Activated B cell treated with CpG ODN at 0.5 μM for 24 hours (primary cell): ENCODE measurements at regions of chr18 and their contacts with region 1.

Region 1: DNA sequence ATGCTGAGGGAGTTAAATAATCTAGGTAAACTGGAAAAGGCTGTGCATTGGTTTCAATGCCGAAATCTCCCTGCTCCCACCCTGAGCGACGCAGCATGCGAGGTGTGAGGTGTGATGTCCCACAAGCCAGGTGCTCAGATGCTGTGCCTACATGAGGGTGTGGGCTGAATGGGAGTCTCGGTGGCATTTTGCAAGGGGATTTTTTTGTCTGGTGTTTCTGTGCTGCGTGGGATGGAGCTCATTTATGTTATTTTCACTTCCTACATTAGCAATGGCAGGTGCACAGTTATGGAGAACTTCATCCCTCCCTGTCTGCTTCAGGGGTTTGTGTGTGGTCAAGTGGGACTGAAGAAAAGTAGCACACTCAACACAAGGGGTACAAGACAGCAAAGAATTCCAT is 110.2 kb upstream of the CCDC68 start:
- DNase-seq: peak; percentile 24
- ATAC-seq: peak; percentile 69
- H3K4me3 Mint-ChIP-seq: peak overlapping the region; percentile 59
- H3K27ac Mint-ChIP-seq: peak overlapping the region; percentile 94
- H3K4me1 Mint-ChIP-seq: peaks cover 77% of the 10 kb centered on the region
- H3K27me3 Mint-ChIP-seq: no peaks in the 10 kb centered on the region
- CTCF ChIP-seq: no peak

Region 2: GRCh38 chr18:55018602-55019001 is 50.9 kb before region 1 on chr18:
- CTCF ChIA-PET with region 1: no interaction called
- POLR2A ChIA-PET with region 1: no interaction called
- intact Hi-C with region 1: no loop called
- DNase-seq: no peak
- ATAC-seq: no peak
- H3K4me3 Mint-ChIP-seq: no peak overlapping the region
- H3K27ac Mint-ChIP-seq: no peak overlapping the region
- H3K4me1 Mint-ChIP-seq: no peaks in the 10 kb centered on the region
- H3K27me3 Mint-ChIP-seq: no peaks in the 10 kb centered on the region
- CTCF ChIP-seq: no peak

Region 3: DNA sequence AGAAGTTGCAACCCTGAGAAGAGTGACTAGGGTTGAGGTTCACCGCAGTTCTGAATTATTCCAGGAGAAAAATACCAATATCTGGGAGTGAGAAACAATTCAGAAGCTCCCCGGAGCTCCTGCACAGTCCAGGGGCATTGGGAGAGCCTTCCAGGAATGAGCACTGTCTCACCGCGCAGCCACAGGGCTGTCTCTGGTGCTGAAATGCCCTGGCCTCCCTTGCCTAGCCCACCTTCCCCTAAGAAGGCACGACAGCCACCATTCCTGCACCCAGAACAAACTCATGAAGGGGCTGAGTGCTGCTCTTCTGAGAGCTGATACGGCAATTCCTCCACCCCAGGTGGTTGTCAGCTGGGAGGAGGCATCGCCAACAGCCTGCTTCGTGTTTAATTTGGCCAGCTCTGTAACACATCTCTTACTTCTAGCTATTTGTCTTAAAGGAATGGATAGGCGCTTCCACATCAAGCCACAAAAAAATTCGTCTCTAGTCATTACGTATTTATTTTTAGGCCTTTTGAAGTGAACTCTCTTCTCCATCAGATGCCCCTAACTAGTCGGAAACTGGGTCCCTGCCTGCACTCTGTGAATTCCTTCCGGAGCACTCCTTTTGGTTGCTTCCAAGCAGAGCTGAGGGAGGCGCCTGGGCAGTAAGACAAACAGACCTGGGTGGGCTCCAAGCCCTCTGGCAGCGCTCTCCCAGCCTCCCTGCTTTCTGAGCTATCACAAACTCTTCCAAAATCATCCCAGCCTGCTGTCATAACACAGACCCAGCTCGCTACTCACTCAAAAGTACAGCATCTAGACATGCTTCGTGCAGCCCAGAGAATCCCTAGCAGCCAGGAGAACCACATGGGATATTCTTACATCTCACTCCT is 10.2 kb after region 1 on chr18:
- CTCF ChIA-PET with region 1: no interaction called
- POLR2A ChIA-PET with region 1: interaction called, 26 read pairs
- intact Hi-C with region 1: loop called (anchors 2 kb)
- DNase-seq: no peak
- ATAC-seq: no peak
- H3K4me3 Mint-ChIP-seq: no peak overlapping the region
- H3K27ac Mint-ChIP-seq: peak overlapping the region; percentile 20
- H3K4me1 Mint-ChIP-seq: peaks cover 4% of the 10 kb centered on the region
- H3K27me3 Mint-ChIP-seq: no peaks in the 10 kb centered on the region
- CTCF ChIP-seq: no peak

Region 4: GRCh38 chr18:55085557-55086285 is 16.2 kb after region 1 on chr18:
- CTCF ChIA-PET with region 1: no interaction called
- POLR2A ChIA-PET with region 1: interaction called, 26 read pairs
- intact Hi-C with region 1: loop called (anchors 2 kb)
- DNase-seq: no peak
- ATAC-seq: peak; percentile 54
- H3K4me3 Mint-ChIP-seq: peak overlapping the region; percentile 2
- H3K27ac Mint-ChIP-seq: peak overlapping the region; percentile 30
- H3K4me1 Mint-ChIP-seq: peaks cover 42% of the 10 kb centered on the region
- H3K27me3 Mint-ChIP-seq: no peaks in the 10 kb centered on the region
- CTCF ChIP-seq: no peak

Region 5: DNA sequence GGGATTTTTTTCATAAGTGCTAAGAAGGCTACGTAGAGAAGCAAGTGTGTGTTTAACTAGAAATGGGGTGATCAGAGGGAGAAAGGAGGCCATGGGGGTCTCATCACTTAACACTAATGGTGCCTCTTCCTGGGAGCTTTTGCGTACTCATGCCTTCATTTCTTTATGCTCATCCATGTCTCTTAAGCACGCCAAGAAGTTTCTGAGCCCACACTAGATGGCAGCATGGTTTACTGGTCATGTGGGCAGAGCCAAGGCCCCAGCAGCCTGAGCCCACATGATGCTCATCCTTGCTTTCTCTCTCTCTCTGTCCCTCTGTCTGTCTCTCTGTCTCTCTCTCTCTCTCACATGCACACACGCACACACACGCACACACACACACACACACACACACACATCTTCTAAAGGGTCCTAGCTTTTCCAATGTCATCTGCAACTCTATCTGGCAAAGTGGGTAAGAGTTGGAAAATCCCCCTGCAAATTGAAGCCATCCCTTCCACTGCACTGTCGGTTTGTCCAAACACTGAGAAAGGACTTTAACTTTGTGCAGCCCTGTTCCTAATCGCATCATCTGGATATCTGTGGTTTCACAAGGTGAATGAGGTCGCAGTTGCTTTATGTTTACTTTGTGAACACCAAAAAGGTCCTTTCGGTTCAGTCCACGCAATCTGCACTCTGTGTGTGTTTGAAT is 26.9 kb after region 1 on chr18:
- CTCF ChIA-PET with region 1: interaction called, 3 read pairs
- POLR2A ChIA-PET with region 1: interaction called, 23 read pairs
- intact Hi-C with region 1: no loop called
- DNase-seq: no peak
- ATAC-seq: peak; percentile 74
- H3K4me3 Mint-ChIP-seq: no peak overlapping the region
- H3K27ac Mint-ChIP-seq: peak overlapping the region; percentile 50
- H3K4me1 Mint-ChIP-seq: peaks cover 51% of the 10 kb centered on the region
- H3K27me3 Mint-ChIP-seq: no peaks in the 10 kb centered on the region
- CTCF ChIP-seq: no peak

Region 6: DNA sequence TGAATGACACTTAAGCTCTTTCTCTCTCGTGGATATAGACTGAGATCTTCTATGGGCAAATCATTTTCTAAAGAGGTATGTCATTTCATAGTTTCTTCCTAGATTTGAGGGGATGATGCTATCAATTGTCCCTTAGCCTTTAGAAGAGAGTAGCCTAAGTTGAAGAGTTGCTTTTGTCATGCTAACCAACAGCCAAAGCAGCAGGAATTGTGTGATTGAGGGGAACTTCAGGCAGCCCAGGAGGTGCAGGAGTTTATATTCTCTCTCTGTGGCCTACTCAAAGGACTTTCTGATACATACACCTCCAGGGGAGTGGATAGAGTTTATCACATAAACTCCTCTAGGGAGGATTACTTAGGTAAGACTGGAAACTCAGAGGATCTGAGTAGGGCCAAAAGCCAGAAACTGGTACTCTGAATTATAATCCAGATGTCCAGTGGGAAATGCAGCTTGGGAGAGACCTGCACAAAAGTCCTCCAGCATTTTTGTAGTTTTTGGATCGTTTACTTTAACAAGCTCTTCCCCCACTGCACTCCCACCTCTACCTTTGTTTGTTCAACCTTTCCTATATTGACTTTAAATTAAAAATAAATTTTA is 40.4 kb after region 1 on chr18:
- CTCF ChIA-PET with region 1: no interaction called
- POLR2A ChIA-PET with region 1: interaction called, 10 read pairs
- intact Hi-C with region 1: no loop called
- DNase-seq: no peak
- ATAC-seq: no peak
- H3K4me3 Mint-ChIP-seq: no peak overlapping the region
- H3K27ac Mint-ChIP-seq: no peak overlapping the region
- H3K4me1 Mint-ChIP-seq: peaks cover 27% of the 10 kb centered on the region
- H3K27me3 Mint-ChIP-seq: no peaks in the 10 kb centered on the region
- CTCF ChIP-seq: no peak

Region 7: DNA sequence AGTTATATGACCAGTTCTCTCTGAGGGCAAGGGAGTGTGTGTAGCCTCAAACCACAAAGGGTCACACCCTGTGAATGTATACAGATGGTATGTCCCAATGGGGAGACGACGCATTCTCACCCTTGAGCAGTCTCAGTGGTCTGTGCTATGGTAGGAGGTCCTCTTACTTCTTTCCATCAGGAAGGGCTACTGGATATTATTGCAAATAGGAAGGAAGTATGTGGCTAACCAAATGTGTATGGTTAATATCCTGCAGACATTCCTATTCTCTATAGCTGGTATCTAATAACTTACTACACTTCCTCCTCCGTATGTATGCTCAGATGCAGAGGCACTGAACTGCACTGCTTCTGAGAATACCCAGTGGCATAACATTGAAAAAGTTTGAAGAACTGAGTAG is 196.5 kb after region 1 on chr18:
- CTCF ChIA-PET with region 1: no interaction called
- POLR2A ChIA-PET with region 1: interaction called, 4 read pairs
- intact Hi-C with region 1: loop called (anchors 1 kb)
- DNase-seq: no peak
- ATAC-seq: peak; percentile 38
- H3K4me3 Mint-ChIP-seq: peak overlapping the region; percentile 44
- H3K27ac Mint-ChIP-seq: peak overlapping the region; percentile 93
- H3K4me1 Mint-ChIP-seq: peaks cover 73% of the 10 kb centered on the region
- H3K27me3 Mint-ChIP-seq: no peaks in the 10 kb centered on the region
- CTCF ChIP-seq: no peak

Region 8: GRCh38 chr18:55694291-55694690 is 624.8 kb after region 1 on chr18:
- CTCF ChIA-PET with region 1: no interaction called
- POLR2A ChIA-PET with region 1: no interaction called
- intact Hi-C with region 1: no loop called
- DNase-seq: no peak
- ATAC-seq: no peak
- H3K4me3 Mint-ChIP-seq: no peak overlapping the region
- H3K27ac Mint-ChIP-seq: no peak overlapping the region
- H3K4me1 Mint-ChIP-seq: no peaks in the 10 kb centered on the region
- H3K27me3 Mint-ChIP-seq: no peaks in the 10 kb centered on the region
- CTCF ChIP-seq: no peak